Activated T-helper 2 cell treated with anti-CD3 and anti-CD28 coated beads, Interferon-gamma antibody, Interleukin-2, Interleukin-4, amounts not matched to agents 10 μg/mL and 5 μg/mL and 100 μg/mL, durations not matched to agents 14 hours and 24 hours and 36 hours (primary cell): ENCODE measurements at regions of chr3 and their contacts with region 1.

Region 1: GRCh38 chr3:71360764-71361163 is 222.8 kb downstream of the FOXP1 start:
- DNase-seq: no peak
- H3K4me3 Mint-ChIP-seq: peak overlapping the region; percentile 52
- H3K27ac Mint-ChIP-seq: peak overlapping the region; percentile 96
- H3K4me1 Mint-ChIP-seq: peaks cover 79% of the 10 kb centered on the region
- H3K27me3 Mint-ChIP-seq: no peaks in the 10 kb centered on the region

Region 2: DNA sequence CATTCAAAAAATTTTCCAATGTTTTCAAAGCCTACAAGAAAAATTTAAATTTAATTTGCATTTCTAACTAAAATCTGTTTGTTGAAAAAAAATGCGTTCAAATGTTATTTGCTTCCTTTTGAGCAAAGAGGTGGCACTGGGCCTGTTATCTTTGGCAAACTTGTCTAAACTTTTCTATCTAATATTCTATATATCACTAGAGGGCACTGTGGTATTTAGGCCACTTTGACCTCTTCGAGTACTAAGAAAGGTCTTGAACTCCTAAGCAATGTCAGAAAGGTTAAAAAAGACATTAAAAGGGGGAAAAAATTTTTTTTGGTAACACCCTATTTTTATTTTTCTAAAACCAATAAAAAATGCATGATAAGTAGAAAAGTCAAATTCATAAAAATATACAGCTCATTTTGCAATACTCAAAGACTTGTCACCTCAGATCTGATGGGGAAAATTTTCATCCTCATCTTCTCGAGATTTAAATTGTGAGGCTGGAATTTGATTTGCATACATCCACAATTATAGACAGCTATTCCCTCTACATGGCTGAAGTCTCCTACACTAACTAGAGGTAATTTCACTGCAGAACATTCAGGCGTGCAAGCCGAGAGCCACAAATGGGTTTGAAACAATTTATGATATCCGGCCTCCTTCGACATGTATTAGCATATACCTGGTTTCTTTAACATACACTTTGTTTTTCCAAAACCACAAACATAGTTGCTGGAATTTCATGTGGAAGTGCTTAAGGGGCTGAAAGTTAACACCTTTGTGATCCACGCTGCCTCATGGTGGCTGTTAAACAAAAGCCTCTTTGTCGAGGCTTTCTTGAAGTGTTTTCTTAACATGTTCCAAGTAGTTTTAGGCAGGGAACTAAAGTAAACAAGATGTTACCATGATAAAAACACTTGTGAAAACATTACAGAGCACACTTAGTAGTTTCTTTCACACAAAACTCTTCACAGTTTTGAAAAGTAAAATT is 353.7 kb before region 1 on chr3:
- intact Hi-C with region 1: loop called (anchors 2 kb)
- DNase-seq: no peak
- H3K4me3 Mint-ChIP-seq: no peak overlapping the region
- H3K27ac Mint-ChIP-seq: no peak overlapping the region
- H3K4me1 Mint-ChIP-seq: peaks cover 59% of the 10 kb centered on the region
- H3K27me3 Mint-ChIP-seq: no peaks in the 10 kb centered on the region

Region 3: GRCh38 chr3:71380096-71380495 is 19.3 kb after region 1 on chr3:
- intact Hi-C with region 1: loop called (anchors 1 kb)
- DNase-seq: no peak
- H3K4me3 Mint-ChIP-seq: no peak overlapping the region
- H3K27ac Mint-ChIP-seq: peak overlapping the region; percentile 68
- H3K4me1 Mint-ChIP-seq: peaks cover 56% of the 10 kb centered on the region
- H3K27me3 Mint-ChIP-seq: no peaks in the 10 kb centered on the region

Region 4: GRCh38 chr3:71398157-71398836 is 37.5 kb after region 1 on chr3:
- intact Hi-C with region 1: loop called (anchors 1 kb)
- DNase-seq: no peak
- H3K4me3 Mint-ChIP-seq: no peak overlapping the region
- H3K27ac Mint-ChIP-seq: peak overlapping the region; percentile 50
- H3K4me1 Mint-ChIP-seq: peaks cover 45% of the 10 kb centered on the region
- H3K27me3 Mint-ChIP-seq: peaks cover 10% of the 10 kb centered on the region

Region 5: GRCh38 chr3:71444028-71444860 is 83.5 kb after region 1 on chr3:
- intact Hi-C with region 1: loop called (anchors 5 kb)
- DNase-seq: peak; percentile 79
- H3K4me3 Mint-ChIP-seq: peak overlapping the region; percentile 71
- H3K27ac Mint-ChIP-seq: peak overlapping the region; percentile 99
- H3K4me1 Mint-ChIP-seq: peaks cover 86% of the 10 kb centered on the region
- H3K27me3 Mint-ChIP-seq: no peaks in the 10 kb centered on the region